A549 (cell line): ENCODE measurements at regions of chr1 and their contacts with region 1.

Region 1: GRCh38 chr1:40951943-40952743 is 27.4 kb upstream of the CTPS1 start:
- DNase-seq: peak; percentile 53 to 67
- ATAC-seq: peak; percentile 77 to 80; a peak in 5 of 6 replicates
- H3K4me3 ChIP-seq: no peak overlapping the region
- H3K27ac ChIP-seq: peak overlapping the region; percentile 77 to 87
- H3K4me1 ChIP-seq: peaks cover 34% of the 10 kb centered on the region
- CTCF ChIP-seq: peak; percentile 87
- EP300 ChIP-seq: no peak
- POLR2A ChIP-seq: no peak
- RAD21 ChIP-seq: peak; percentile 95 to 98

Region 2: GRCh38 chr1:40699787-40700186 is 252.4 kb before region 1 on chr1:
- CTCF ChIA-PET with region 1: no interaction called
- POLR2A ChIA-PET with region 1: no interaction called
- DNase-seq: no peak
- ATAC-seq: no peak
- H3K4me3 ChIP-seq: no peak overlapping the region
- H3K27ac ChIP-seq: no peak overlapping the region
- H3K4me1 ChIP-seq: peaks cover 14% of the 10 kb centered on the region; the same call in 2 of the 3 replicates
- CTCF ChIP-seq: no peak
- EP300 ChIP-seq: no peak
- POLR2A ChIP-seq: no peak
- RAD21 ChIP-seq: no peak

Region 3: GRCh38 chr1:40774266-40774998 is 177.7 kb before region 1 on chr1:
- CTCF ChIA-PET with region 1: interaction called, 47 read pairs
- POLR2A ChIA-PET with region 1: no interaction called
- DNase-seq: peak; percentile 18 to 48
- ATAC-seq: peak; percentile 74 to 87; a peak in 5 of 6 replicates
- H3K4me3 ChIP-seq: no peak overlapping the region
- H3K27ac ChIP-seq: no peak overlapping the region
- H3K4me1 ChIP-seq: no peaks in the 10 kb centered on the region
- CTCF ChIP-seq: peak; percentile 60
- EP300 ChIP-seq: no peak
- POLR2A ChIP-seq: no peak
- RAD21 ChIP-seq: peak; percentile 35 to 39; a peak in 3 of 5 replicates

Region 4: GRCh38 chr1:40849801-40850592 is 102.1 kb before region 1 on chr1:
- CTCF ChIA-PET with region 1: interaction called, 352 read pairs
- POLR2A ChIA-PET with region 1: interaction called, 3 read pairs
- DNase-seq: peak; percentile 57 to 61
- ATAC-seq: peak; percentile 83 to 91
- H3K4me3 ChIP-seq: no peak overlapping the region
- H3K27ac ChIP-seq: peak overlapping the region; percentile 44 to 52; a peak in 3 of 6 replicates
- H3K4me1 ChIP-seq: peaks cover 13% of the 10 kb centered on the region; the same call in 2 of the 3 replicates
- CTCF ChIP-seq: peak; percentile 74
- EP300 ChIP-seq: no peak
- POLR2A ChIP-seq: no peak
- RAD21 ChIP-seq: peak; percentile 66 to 74

Region 5: GRCh38 chr1:40898431-40898901 is 53.7 kb before region 1 on chr1:
- CTCF ChIA-PET with region 1: interaction called, 14 read pairs
- POLR2A ChIA-PET with region 1: interaction called, 4 read pairs
- DNase-seq: peak in 1 of 2 experiments; percentile 71
- ATAC-seq: peak; percentile 48 to 65; a peak in 3 of 6 replicates
- H3K4me3 ChIP-seq: no peak overlapping the region
- H3K27ac ChIP-seq: peak overlapping the region; percentile 73 to 85
- H3K4me1 ChIP-seq: peaks cover 45% of the 10 kb centered on the region
- CTCF ChIP-seq: no peak
- EP300 ChIP-seq: peak in 1 of 2 experiments; percentile 35; a peak in 1 of 5 replicates
- POLR2A ChIP-seq: no peak
- RAD21 ChIP-seq: no peak

Region 6: DNA sequence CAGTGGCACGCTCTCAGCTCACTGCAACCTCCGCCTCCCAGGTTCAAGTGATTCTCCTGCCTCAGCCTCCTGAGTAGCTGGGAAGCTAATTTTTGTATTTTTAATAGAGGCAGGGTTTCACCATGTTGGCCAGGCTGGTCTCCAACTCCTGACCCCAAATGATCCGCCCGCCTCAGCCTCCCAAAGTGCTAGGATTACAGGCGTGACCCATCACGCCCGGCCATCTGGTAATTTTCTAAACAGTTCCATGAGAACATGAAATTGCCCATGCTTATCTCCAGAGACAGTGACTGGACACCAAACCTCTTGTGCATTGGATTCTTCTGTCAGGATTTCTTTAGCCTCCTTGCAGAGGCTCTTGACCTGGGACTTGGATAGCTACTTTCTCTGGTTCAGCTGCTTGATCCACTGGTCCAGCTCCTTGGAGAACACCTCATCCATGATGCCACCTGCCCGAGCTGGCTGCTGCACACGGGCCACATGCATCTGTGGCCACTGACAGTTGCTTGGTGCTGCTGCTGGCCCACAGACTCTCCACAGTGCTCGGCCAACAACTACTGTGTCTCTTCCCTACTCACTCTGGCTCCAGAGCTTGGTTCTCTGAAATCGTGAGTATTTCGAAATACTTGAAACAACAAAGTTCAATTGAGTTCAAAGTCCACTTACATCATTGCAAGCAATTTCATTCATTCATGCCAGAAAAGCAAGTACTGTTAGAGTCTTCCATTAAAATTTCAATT is 12.7 kb before region 1 on chr1:
- CTCF ChIA-PET with region 1: interaction called, 47 read pairs
- POLR2A ChIA-PET with region 1: no interaction called
- DNase-seq: peak in 1 of 2 experiments; percentile 69
- ATAC-seq: peak; percentile 83 to 88
- H3K4me3 ChIP-seq: no peak overlapping the region
- H3K27ac ChIP-seq: peak overlapping the region; percentile 84 to 94
- H3K4me1 ChIP-seq: peaks cover 52% of the 10 kb centered on the region
- CTCF ChIP-seq: no peak
- EP300 ChIP-seq: no peak
- POLR2A ChIP-seq: no peak
- RAD21 ChIP-seq: no peak

Region 7: DNA sequence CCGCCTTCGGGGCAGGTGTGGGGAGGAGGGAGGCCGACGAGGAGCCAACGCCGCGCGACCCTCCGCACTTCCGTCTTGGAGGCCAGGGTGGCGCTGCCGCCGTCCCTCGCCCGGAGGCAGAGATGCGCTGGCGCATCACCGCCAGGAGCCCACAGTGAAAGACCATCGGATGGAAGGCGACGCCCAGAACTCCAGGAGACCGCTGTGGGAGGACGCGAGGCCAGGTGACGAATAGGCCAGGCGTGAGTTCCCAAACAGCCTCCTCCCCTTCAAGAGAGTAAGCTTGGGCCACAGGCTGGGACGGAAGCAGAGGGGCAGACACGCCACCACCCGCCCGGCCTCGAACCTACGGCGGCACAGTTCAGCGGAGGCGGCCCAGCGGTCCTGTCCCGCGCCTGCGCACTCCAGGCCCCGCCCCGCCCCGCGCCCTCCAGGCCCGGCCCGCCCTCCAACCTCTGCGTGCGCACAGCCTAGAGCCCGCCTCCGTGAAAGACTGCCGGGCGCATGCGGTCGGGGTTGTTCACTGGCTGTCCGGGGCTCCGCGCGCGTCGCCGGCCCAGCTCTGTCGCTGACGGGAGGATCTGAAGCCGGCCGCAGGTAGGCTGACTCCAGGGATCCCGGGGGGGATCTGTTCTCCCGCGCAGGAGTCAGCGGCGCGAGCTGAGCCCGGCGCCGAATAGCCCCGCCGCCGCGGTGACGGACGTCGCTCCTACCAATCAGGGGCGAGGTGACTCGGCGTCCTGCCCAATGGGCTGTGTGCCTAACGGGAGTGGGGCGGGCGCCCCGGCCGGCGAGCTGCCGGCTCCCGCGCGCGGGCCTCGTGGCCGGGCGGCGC is 27.3 kb after region 1 on chr1 and contains the start of gene CTPS1:
- CTCF ChIA-PET with region 1: interaction called, 9 read pairs
- POLR2A ChIA-PET with region 1: interaction called, 12 read pairs
- DNase-seq: peak; percentile 89 to 96
- ATAC-seq: peak; percentile 72 to 78
- H3K4me3 ChIP-seq: peak within 1 kb of the TSS; percentile 93
- H3K27ac ChIP-seq: peak within 1 kb of the TSS; percentile 99 to 100
- H3K4me1 ChIP-seq: peaks cover 60% of the 10 kb centered on the region
- CTCF ChIP-seq: peak; percentile 24; the same call in 1 of the 3 replicates
- EP300 ChIP-seq: no peak
- POLR2A ChIP-seq: peak; percentile 55
- RAD21 ChIP-seq: no peak
- polyA plus RNA-seq, gene CTPS1: 145 and 181 TPM in 2 replicates